Heart right ventricle (tissue), 16 donors: ENCODE measurements at regions of chr12 and their contacts with region 1.

Region 1: GRCh38 chr12:94545935-94546771 is 86.5 kb upstream of the CEP83 start:
- DNase-seq: peak in 1 of 2 donors; percentile 42
- ATAC-seq: peak; percentile 87 to 95 (median 90)
- H3K4me3 ChIP-seq: no peak overlapping the region
- H3K27ac ChIP-seq: no peak overlapping the region
- H3K4me1 ChIP-seq: no peaks in the 10 kb centered on the region
- H3K27me3 ChIP-seq: no peaks in the 10 kb centered on the region
- CTCF ChIP-seq: peak; percentile 70 to 90 (median 81)

Region 2: GRCh38 chr12:94649349-94650142 is 103.4 kb after region 1 on chr12:
- intact Hi-C with region 1: loop called in 1 of 10 experiments (anchors 5 kb)
- DNase-seq: peak; percentile 36 to 63
- ATAC-seq: peak; percentile 69 to 88 (median 76)
- H3K4me3 ChIP-seq: peak overlapping the region; percentile 24 to 81 (median 68)
- H3K27ac ChIP-seq: peak overlapping the region; percentile 30 to 86 (median 72)
- H3K4me1 ChIP-seq: peaks cover 0 to 24% (median 8%) of the 10 kb centered on the region in 9 donors
- H3K27me3 ChIP-seq: peaks cover 0 to 36% (median 0%) of the 10 kb centered on the region in 7 donors
- CTCF ChIP-seq: peak in 8 of 9 donors; percentile 18 to 66 (median 49)

Region 3: GRCh38 chr12:94762259-94762942 is 216.2 kb after region 1 on chr12:
- intact Hi-C with region 1: loop called (anchors 1 to 10 kb)
- DNase-seq: no peak
- ATAC-seq: no peak
- H3K4me3 ChIP-seq: no peak overlapping the region
- H3K27ac ChIP-seq: no peak overlapping the region
- H3K4me1 ChIP-seq: no peaks in the 10 kb centered on the region
- H3K27me3 ChIP-seq: peaks cover 0 to 6% (median 0%) of the 10 kb centered on the region in 7 donors
- CTCF ChIP-seq: no peak

Region 4: GRCh38 chr12:94769047-94769420 is 222.9 kb after region 1 on chr12:
- intact Hi-C with region 1: loop called (anchors 1 to 10 kb)
- DNase-seq: no peak
- ATAC-seq: no peak
- H3K4me3 ChIP-seq: no peak overlapping the region
- H3K27ac ChIP-seq: no peak overlapping the region
- H3K4me1 ChIP-seq: peaks cover 0 to 15% (median 0%) of the 10 kb centered on the region in 9 donors
- H3K27me3 ChIP-seq: peaks cover 0 to 4% (median 0%) of the 10 kb centered on the region in 7 donors
- CTCF ChIP-seq: no peak

Region 5: DNA sequence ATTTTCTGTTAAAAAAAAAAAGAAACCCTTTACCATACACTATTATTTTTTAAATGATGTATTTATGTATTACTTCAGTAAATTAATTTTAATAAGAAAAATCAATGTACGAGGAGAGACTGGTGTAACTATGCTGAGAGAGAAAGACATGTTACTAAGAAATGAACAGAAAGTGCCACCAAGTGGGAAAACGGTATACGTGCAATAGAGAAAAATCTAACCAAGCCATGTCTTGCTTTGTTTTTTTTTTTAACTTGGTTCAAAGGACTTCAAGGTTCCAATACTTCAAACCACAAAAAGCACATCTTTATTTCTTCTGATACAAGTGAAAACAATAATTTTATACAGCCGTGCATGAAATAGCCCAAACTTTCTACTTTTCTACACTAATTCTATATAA is 434.4 kb after region 1 on chr12:
- intact Hi-C with region 1: loop called in 1 of 10 experiments (anchors 10 kb)
- DNase-seq: no peak
- ATAC-seq: no peak
- H3K4me3 ChIP-seq: no peak overlapping the region
- H3K27ac ChIP-seq: no peak overlapping the region
- H3K4me1 ChIP-seq: peaks cover 0 to 24% (median 14%) of the 10 kb centered on the region in 9 donors
- H3K27me3 ChIP-seq: no peaks in the 10 kb centered on the region
- CTCF ChIP-seq: peak in 5 of 9 donors; percentile 33 to 46 (median 34)

Region 6: DNA sequence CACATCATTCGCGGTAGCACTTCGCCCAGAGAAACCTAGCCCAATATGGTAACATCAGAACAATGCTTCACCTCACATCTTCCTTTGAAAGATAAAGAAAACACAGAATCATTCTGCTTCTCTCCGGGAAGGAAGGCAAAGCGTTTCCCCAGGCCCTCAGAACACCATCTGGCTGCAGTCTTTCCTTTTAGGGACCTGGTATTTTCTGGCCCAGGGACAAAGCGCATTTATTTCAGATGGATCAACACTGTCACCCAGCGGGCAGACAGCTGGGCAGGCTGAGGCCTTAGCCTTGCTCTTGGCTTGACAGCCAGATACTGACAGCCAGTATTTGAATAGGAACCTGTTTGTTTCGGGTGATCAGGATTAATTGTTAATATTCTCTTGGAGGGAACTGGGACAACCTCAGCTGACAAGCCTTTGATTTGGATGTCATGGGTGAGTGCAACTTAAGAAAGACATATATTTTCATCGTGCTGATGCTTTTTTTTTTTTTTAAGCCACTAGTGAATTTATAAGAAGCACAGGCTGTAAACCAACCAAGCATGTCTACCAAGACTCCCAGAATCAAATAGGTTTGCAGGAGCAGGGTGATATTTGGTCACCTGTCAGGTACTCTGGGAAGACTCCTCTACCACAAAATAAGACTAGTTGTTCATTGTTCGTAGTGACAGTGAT is 790.4 kb after region 1 on chr12:
- intact Hi-C with region 1: loop called in 5 of 10 experiments (anchors 2 to 10 kb)
- DNase-seq: peak; percentile 33 to 76
- ATAC-seq: peak; percentile 87 to 94 (median 93)
- H3K4me3 ChIP-seq: peak overlapping the region in 5 of 10 donors; percentile 2 to 36 (median 21)
- H3K27ac ChIP-seq: peak overlapping the region in 9 of 10 donors; percentile 37 to 69 (median 54)
- H3K4me1 ChIP-seq: peaks cover 0 to 16% (median 9%) of the 10 kb centered on the region in 9 donors
- H3K27me3 ChIP-seq: no peaks in the 10 kb centered on the region
- CTCF ChIP-seq: peak; percentile 71 to 94 (median 89)